Activated naive CD4-positive, alpha-beta T cell treated with anti-CD3 and anti-CD28 coated beads for 36 hours (primary cell): ENCODE measurements at regions of chr4 and their contacts with region 1.

Region 1: GRCh38 chr4:122577808-122578781 is 42.8 kb downstream of the IL21 start:
- DNase-seq: peak; percentile 88
- H3K4me3 Mint-ChIP-seq: peak overlapping the region; percentile 65
- H3K27ac Mint-ChIP-seq: peak overlapping the region; percentile 99
- H3K4me1 Mint-ChIP-seq: peaks cover 76% of the 10 kb centered on the region
- H3K27me3 Mint-ChIP-seq: no peaks in the 10 kb centered on the region

Region 2: DNA sequence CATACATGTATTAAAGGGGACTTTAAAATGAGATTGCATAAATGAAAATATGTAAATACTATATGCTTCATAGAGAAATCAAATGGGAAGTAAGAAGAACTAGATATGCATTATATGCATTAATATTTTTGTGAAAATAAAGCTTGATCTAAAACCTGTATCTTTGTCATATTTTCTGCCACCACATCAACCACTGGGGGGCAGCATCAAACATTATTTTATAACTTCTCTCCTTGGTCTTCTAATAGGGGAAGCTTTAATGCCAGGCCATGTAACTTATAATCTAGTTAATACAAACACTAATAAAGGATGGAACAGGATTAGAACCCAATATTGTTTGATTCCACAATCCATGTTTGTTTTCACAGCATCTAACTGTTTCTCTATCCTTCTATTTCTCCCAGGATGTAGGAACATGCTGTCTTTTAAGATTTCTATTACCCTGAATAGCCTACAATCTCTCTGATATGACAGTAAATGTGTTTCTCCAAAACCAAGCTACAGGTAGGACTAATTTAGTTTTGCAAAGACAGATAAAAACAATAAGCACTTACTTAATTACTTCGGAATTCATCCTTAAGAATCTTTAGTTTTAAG is 1207.3 kb before region 1 on chr4:
- CTCF ChIA-PET with region 1: no interaction called
- intact Hi-C with region 1: loop called (anchors 2 kb)
- DNase-seq: peak; percentile 66
- H3K4me3 Mint-ChIP-seq: no peak overlapping the region
- H3K27ac Mint-ChIP-seq: no peak overlapping the region
- H3K4me1 Mint-ChIP-seq: no peaks in the 10 kb centered on the region
- H3K27me3 Mint-ChIP-seq: peaks cover 9% of the 10 kb centered on the region

Region 3: GRCh38 chr4:121900132-121900983 is 677.7 kb before region 1 on chr4:
- CTCF ChIA-PET with region 1: interaction called, 27 read pairs
- intact Hi-C with region 1: loop called (anchors 1 kb)
- DNase-seq: peak; percentile 79
- H3K4me3 Mint-ChIP-seq: no peak overlapping the region
- H3K27ac Mint-ChIP-seq: no peak overlapping the region
- H3K4me1 Mint-ChIP-seq: peaks cover 10% of the 10 kb centered on the region
- H3K27me3 Mint-ChIP-seq: no peaks in the 10 kb centered on the region

Region 4: GRCh38 chr4:122151982-122152710 is 425.9 kb before region 1 on chr4 and contains the start of gene BLTP1:
- CTCF ChIA-PET with region 1: no interaction called
- intact Hi-C with region 1: loop called (anchors 1 kb)
- DNase-seq: peak; percentile 88
- H3K4me3 Mint-ChIP-seq: peak within 1 kb of the TSS; percentile 95
- H3K27ac Mint-ChIP-seq: peak within 1 kb of the TSS; percentile 96
- H3K4me1 Mint-ChIP-seq: peaks cover 52% of the 10 kb centered on the region
- H3K27me3 Mint-ChIP-seq: no peaks in the 10 kb centered on the region
- total RNA-seq, gene BLTP1: 20.5 to 23.6 TPM

Region 5: GRCh38 chr4:122450847-122451246 is 127.2 kb before region 1 on chr4:
- CTCF ChIA-PET with region 1: interaction called, 61 read pairs
- intact Hi-C with region 1: no loop called
- DNase-seq: peak; percentile 59
- H3K4me3 Mint-ChIP-seq: peak overlapping the region; percentile 67
- H3K27ac Mint-ChIP-seq: peak overlapping the region; percentile 96
- H3K4me1 Mint-ChIP-seq: peaks cover 17% of the 10 kb centered on the region
- H3K27me3 Mint-ChIP-seq: no peaks in the 10 kb centered on the region

Region 6: GRCh38 chr4:122548452-122548851 is 29.6 kb before region 1 on chr4:
- CTCF ChIA-PET with region 1: interaction called, 66 read pairs
- intact Hi-C with region 1: loop called (anchors 1 kb)
- DNase-seq: peak; percentile 64
- H3K4me3 Mint-ChIP-seq: peak overlapping the region; percentile 77
- H3K27ac Mint-ChIP-seq: peak overlapping the region; percentile 96
- H3K4me1 Mint-ChIP-seq: peaks cover 93% of the 10 kb centered on the region
- H3K27me3 Mint-ChIP-seq: no peaks in the 10 kb centered on the region

Region 7: DNA sequence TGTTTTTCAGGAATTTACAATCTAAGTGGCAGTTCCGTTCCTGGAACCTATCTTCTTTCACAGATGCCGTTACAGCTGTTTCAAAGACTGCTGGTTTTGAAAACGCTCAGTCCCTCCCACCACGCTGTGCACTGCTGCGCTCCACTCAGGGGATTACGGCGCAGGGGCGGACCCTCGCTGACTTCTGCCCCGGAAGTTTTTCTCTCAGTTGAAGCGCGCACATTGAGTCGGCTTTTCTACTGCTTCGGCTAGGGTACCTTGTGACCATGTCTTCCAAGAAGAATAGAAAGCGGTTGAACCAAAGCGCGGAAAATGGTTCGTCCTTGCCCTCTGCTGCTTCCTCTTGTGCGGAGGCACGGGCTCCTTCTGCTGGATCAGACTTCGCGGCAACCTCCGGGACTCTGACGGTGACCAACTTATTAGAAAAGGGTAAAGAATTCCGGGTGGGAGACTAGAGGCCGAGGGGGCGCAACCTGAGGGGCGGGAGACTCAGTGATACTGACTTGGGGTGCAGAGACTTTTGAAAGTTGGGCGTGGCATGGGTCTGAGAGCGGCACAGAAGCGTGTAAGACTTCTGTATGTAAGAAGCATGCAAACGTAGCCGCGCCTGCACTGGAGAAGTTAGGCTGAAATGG is 344.9 kb after region 1 on chr4:
- CTCF ChIA-PET with region 1: no interaction called
- intact Hi-C with region 1: loop called (anchors 1 kb)
- DNase-seq: peak; percentile 94
- H3K4me3 Mint-ChIP-seq: peak overlapping the region; percentile 99
- H3K27ac Mint-ChIP-seq: peak overlapping the region; percentile 87
- H3K4me1 Mint-ChIP-seq: peaks cover 11% of the 10 kb centered on the region
- H3K27me3 Mint-ChIP-seq: peaks cover 2% of the 10 kb centered on the region